A549 (cell line): ENCODE measurements at regions of chr16 and their contacts with region 1.

Region 1: GRCh38 chr16:29848420-29849297 is 14.4 kb downstream of the CDIPT start:
- DNase-seq: peak; percentile 77 to 81
- ATAC-seq: peak; percentile 92 to 95
- H3K4me3 ChIP-seq: no peak overlapping the region
- H3K27ac ChIP-seq: no peak overlapping the region
- H3K4me1 ChIP-seq: no peaks in the 10 kb centered on the region
- CTCF ChIP-seq: peak; percentile 89
- EP300 ChIP-seq: no peak
- POLR2A ChIP-seq: no peak
- RAD21 ChIP-seq: peak; percentile 78 to 86

Region 2: GRCh38 chr16:29805378-29806098 is 43.1 kb before region 1 on chr16:
- CTCF ChIA-PET with region 1: interaction called, 568 read pairs
- POLR2A ChIA-PET with region 1: interaction called, 4 read pairs
- DNase-seq: peak; percentile 84 to 98
- ATAC-seq: peak; percentile 44 to 80
- H3K4me3 ChIP-seq: peak overlapping the region; percentile 55
- H3K27ac ChIP-seq: peak overlapping the region; percentile 98 to 99
- H3K4me1 ChIP-seq: peaks cover 38% of the 10 kb centered on the region
- CTCF ChIP-seq: no peak
- EP300 ChIP-seq: peak in 1 of 2 experiments; percentile 49; a peak in 1 of 5 replicates
- POLR2A ChIP-seq: peak; percentile 57
- RAD21 ChIP-seq: peak in 1 of 2 experiments; percentile 3; a peak in 1 of 5 replicates

Region 3: DNA sequence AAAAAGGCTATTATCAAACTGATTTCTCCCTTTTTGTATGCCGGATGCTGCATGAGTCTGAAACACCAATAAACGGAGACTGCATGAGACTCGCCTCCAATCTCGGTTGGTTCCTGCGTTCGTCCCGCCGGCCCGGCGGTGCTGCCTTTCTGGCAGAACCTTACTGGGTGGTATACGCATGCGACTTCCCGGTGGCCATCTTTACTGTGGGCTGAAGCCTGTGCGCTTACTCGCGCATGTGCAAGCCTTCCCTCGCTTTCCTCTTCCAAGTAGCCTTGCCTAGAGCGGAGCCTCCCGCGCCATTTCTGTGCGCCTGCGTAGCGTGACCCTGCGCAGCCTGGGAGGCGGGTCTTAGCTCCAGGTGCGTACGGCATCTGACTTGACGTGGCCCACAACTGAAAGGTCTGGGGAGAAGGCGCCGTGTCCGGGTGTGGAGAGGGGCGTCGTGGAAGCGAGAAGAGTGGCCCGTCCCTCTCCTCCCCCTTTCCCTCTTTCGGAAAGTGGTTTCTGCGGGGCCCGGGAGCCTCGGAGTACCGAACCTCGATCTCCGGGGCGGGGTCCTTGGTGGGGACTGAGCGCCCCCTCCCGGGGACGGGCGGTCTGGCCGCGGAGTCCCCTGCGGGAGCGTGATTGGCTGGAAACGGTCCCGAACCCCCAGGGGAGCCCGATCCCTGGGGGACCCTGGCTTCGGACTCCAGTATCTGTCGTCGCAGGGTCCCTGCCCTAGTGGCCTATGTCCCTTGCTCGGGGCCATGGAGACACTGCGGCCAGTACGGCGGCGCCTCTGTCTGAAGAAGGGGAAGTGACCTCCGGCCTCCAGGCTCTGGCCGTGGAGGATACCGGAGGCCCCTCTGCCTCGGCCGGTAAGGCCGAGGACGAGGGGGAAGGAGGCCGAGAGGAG is 32.6 kb before region 1 on chr16 and contains the start of gene PAGR1:
- CTCF ChIA-PET with region 1: interaction called, 568 read pairs
- POLR2A ChIA-PET with region 1: interaction called, 9 read pairs
- DNase-seq: peak; percentile 95 to 100
- ATAC-seq: peak; percentile 49 to 72
- H3K4me3 ChIP-seq: peak within 1 kb of the TSS; percentile 92
- H3K27ac ChIP-seq: peak within 1 kb of the TSS; percentile 98 to 99
- H3K4me1 ChIP-seq: peaks cover 39% of the 10 kb centered on the region
- CTCF ChIP-seq: peak; percentile 92
- EP300 ChIP-seq: no peak
- POLR2A ChIP-seq: peak; percentile 88
- RAD21 ChIP-seq: peak; percentile 51 to 68
- polyA plus RNA-seq, gene PAGR1: 18.9 and 26.7 TPM in 2 replicates

Region 4: GRCh38 chr16:29862884-29863668 is 14.4 kb after region 1 on chr16 and contains the start of gene CDIPT:
- CTCF ChIA-PET with region 1: interaction called, 40 read pairs
- POLR2A ChIA-PET with region 1: no interaction called
- DNase-seq: peak; percentile 84 to 99
- ATAC-seq: peak; percentile 96 to 98
- H3K4me3 ChIP-seq: peak within 1 kb of the TSS; percentile 76
- H3K27ac ChIP-seq: peak within 1 kb of the TSS; percentile 88 to 97
- H3K4me1 ChIP-seq: peaks cover 15% of the 10 kb centered on the region
- CTCF ChIP-seq: peak; percentile 61
- EP300 ChIP-seq: no peak
- POLR2A ChIP-seq: peak; percentile 55
- RAD21 ChIP-seq: peak; percentile 13 to 37; a peak in 4 of 5 replicates
- polyA plus RNA-seq, gene CDIPT: 64.0 and 84.3 TPM in 2 replicates